Activated naive CD8-positive, alpha-beta T cell treated with anti-CD3 and anti-CD28 coated beads, Interleukin-2, amount 10 ng/mL, durations not matched to agents 7 days and 5 days (primary cell): ENCODE measurements at regions of chr11 and their contacts with region 1.

Region 1: GRCh38 chr11:111540114-111540936 is at the start of gene LAYN:
- DNase-seq: peak; percentile 84
- ATAC-seq: peak; percentile 51
- H3K4me3 Mint-ChIP-seq: peak within 1 kb of the TSS; percentile 86
- H3K27ac Mint-ChIP-seq: peak within 1 kb of the TSS; percentile 88
- H3K4me1 Mint-ChIP-seq: peaks cover 49% of the 10 kb centered on the region
- H3K27me3 Mint-ChIP-seq: peaks cover 9% of the 10 kb centered on the region
- total RNA-seq, gene LAYN: 24.0 to 27.0 TPM

Region 2: GRCh38 chr11:111454561-111455192 is 85.6 kb before region 1 on chr11:
- POLR2A ChIA-PET with region 1: interaction called, 12 read pairs
- DNase-seq: peak; percentile 78
- ATAC-seq: peak; percentile 83
- H3K4me3 Mint-ChIP-seq: no peak overlapping the region
- H3K27ac Mint-ChIP-seq: no peak overlapping the region
- H3K4me1 Mint-ChIP-seq: peaks cover 4% of the 10 kb centered on the region
- H3K27me3 Mint-ChIP-seq: peaks cover 6% of the 10 kb centered on the region

Region 3: GRCh38 chr11:111512296-111513239 is 27.8 kb before region 1 on chr11 and contains the start of gene BTG4:
- POLR2A ChIA-PET with region 1: interaction called, 35 read pairs
- DNase-seq: peak; percentile 62
- ATAC-seq: peak; percentile 65
- H3K4me3 Mint-ChIP-seq: peak within 1 kb of the TSS; percentile 89
- H3K27ac Mint-ChIP-seq: peak within 1 kb of the TSS; percentile 88
- H3K4me1 Mint-ChIP-seq: peaks cover 21% of the 10 kb centered on the region
- H3K27me3 Mint-ChIP-seq: peaks cover 35% of the 10 kb centered on the region
- total RNA-seq, gene BTG4: 0.31 TPM in 1 of 2 experiments, not detected in the other

Region 4: GRCh38 chr11:111526501-111526900 is 13.8 kb before region 1 on chr11:
- POLR2A ChIA-PET with region 1: interaction called, 14 read pairs
- DNase-seq: no peak
- ATAC-seq: peak; percentile 69
- H3K4me3 Mint-ChIP-seq: peak overlapping the region; percentile 39
- H3K27ac Mint-ChIP-seq: peak overlapping the region; percentile 72
- H3K4me1 Mint-ChIP-seq: peaks cover 47% of the 10 kb centered on the region
- H3K27me3 Mint-ChIP-seq: no peaks in the 10 kb centered on the region

Region 5: GRCh38 chr11:111612224-111612623 is 71.9 kb after region 1 on chr11:
- POLR2A ChIA-PET with region 1: no interaction called
- DNase-seq: no peak
- ATAC-seq: no peak
- H3K4me3 Mint-ChIP-seq: no peak overlapping the region
- H3K27ac Mint-ChIP-seq: no peak overlapping the region
- H3K4me1 Mint-ChIP-seq: no peaks in the 10 kb centered on the region
- H3K27me3 Mint-ChIP-seq: no peaks in the 10 kb centered on the region

Region 6: GRCh38 chr11:111635706-111636045 is 95.4 kb after region 1 on chr11:
- POLR2A ChIA-PET with region 1: no interaction called
- DNase-seq: no peak
- ATAC-seq: no peak
- H3K4me3 Mint-ChIP-seq: no peak overlapping the region
- H3K27ac Mint-ChIP-seq: no peak overlapping the region
- H3K4me1 Mint-ChIP-seq: peaks cover 25% of the 10 kb centered on the region
- H3K27me3 Mint-ChIP-seq: no peaks in the 10 kb centered on the region

Region 7: DNA sequence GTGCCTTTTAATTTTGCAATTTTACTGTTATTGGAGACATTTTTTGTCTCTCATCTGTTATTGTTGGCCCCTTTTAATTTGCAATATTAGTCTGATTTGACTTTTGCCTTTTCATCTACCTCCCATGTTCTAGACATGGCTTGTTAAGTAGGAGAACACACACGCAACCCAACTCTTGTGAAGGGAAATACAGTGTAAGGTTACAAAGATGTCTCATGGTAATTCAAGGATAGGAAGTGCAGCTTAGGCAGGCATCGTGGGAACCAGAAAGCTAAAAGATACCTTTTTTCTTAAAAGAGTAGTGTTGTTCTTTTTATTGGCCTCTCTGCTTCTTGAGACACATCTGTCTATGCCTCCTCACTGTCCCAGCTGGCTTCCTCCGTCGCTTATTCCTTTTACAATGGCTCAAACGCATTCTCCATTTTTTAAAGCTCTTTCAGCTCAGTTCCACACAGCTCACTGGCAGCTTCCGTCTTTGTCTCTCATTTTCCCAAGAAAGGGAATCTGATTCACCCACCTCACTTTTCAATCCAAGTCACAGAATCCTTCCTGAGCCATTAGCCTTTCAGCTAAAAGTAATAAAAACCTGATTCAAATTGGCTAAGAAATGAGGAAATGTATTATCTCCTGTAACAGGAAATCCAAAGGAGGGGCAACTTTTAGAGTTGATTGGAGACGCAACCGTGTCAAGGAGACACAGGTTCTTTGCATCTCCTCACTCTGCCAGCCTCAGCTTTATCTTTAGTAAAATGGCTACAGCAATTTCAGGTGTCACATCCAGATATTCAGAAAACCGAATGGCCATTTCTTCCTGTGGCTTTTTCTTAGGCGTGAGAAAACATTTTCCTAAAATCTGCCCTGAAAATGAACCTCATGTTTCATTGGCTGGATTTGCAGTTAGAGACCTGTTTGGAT is 119.1 kb after region 1 on chr11:
- POLR2A ChIA-PET with region 1: no interaction called
- DNase-seq: no peak
- ATAC-seq: no peak
- H3K4me3 Mint-ChIP-seq: no peak overlapping the region
- H3K27ac Mint-ChIP-seq: no peak overlapping the region
- H3K4me1 Mint-ChIP-seq: no peaks in the 10 kb centered on the region
- H3K27me3 Mint-ChIP-seq: no peaks in the 10 kb centered on the region

Region 8: GRCh38 chr11:111944651-111945051 is 404.3 kb after region 1 on chr11:
- POLR2A ChIA-PET with region 1: no interaction called
- DNase-seq: no peak
- ATAC-seq: no peak
- H3K4me3 Mint-ChIP-seq: no peak overlapping the region
- H3K27ac Mint-ChIP-seq: no peak overlapping the region
- H3K4me1 Mint-ChIP-seq: peaks cover 9% of the 10 kb centered on the region
- H3K27me3 Mint-ChIP-seq: peaks cover 2% of the 10 kb centered on the region